Right cardiac atrium (tissue), 5 donors: ENCODE measurements at regions of chr2 and their contacts with region 1.

Region 1: GRCh38 chr2:45650851-45651414 is 542 bp upstream of the PRKCE start:
- DNase-seq: peak; percentile 93 to 98 (median 96)
- ATAC-seq: peak; percentile 81 to 89
- H3K4me3 ChIP-seq: peak overlapping the region; percentile 89
- H3K27ac ChIP-seq: peak overlapping the region; percentile 97
- H3K4me1 ChIP-seq: peaks cover 8% of the 10 kb centered on the region
- H3K27me3 ChIP-seq: no peaks in the 10 kb centered on the region

Region 2: DNA sequence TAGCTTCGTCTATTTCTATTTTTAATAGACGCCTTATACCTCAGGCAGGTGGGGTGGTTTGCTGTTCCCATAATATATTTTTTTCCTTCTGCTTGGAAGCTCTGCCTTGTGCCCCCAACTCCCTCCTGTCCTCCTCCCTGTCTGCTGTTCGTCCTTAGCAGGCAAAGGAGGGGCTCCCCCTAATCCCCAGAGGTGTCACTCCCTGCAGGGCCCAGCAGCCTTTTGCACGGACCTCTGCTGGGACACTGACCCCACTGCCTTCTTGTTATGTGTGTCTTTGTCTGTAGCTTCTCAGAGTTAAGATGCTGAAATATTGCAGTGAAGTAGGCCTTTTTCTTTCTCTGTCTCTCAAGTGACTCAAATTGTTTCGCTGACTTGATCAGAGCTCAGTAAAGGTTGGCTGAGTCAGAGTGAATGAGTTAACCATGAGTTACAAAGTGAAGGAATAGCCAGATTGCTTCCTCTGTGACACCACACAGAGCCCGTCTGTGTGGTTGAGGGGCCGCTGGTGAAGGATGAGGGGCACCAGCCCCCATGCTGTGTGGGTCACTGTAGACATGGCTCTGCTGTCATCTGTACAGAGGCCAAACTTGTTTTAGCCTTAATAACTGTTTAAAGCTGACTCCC is 48.2 kb after region 1 on chr2:
- intact Hi-C with region 1: no loop called
- DNase-seq: no peak
- ATAC-seq: peak in 1 of 2 donors; percentile 13
- H3K4me3 ChIP-seq: no peak overlapping the region
- H3K27ac ChIP-seq: no peak overlapping the region
- H3K4me1 ChIP-seq: peaks cover 2% of the 10 kb centered on the region
- H3K27me3 ChIP-seq: no peaks in the 10 kb centered on the region

Region 3: DNA sequence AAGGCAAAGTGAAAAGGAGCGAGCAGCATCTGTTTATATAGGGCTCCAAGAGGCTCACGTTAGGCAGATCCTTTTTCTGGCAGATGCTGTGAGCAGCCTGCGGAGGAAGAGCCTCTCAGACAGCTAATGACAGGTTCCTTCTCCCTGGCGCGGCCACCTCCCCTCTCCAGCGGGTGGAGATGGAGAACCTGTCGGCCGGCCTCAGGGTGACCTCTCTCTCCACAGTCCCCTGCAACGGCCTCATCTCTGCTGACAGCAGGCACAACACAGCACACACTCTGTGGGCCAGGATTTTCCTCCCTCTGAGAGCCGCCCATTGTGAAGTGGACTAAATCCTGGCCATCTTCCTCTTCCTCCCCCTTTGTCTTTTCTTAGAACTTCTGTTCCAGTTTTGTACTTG is 120.3 kb after region 1 on chr2:
- intact Hi-C with region 1: loop called (anchors 5 kb)
- DNase-seq: peak; percentile 64 to 87 (median 85)
- ATAC-seq: peak; percentile 91 to 92
- H3K4me3 ChIP-seq: no peak overlapping the region
- H3K27ac ChIP-seq: peak overlapping the region; percentile 74
- H3K4me1 ChIP-seq: peaks cover 23% of the 10 kb centered on the region
- H3K27me3 ChIP-seq: no peaks in the 10 kb centered on the region

Region 4: DNA sequence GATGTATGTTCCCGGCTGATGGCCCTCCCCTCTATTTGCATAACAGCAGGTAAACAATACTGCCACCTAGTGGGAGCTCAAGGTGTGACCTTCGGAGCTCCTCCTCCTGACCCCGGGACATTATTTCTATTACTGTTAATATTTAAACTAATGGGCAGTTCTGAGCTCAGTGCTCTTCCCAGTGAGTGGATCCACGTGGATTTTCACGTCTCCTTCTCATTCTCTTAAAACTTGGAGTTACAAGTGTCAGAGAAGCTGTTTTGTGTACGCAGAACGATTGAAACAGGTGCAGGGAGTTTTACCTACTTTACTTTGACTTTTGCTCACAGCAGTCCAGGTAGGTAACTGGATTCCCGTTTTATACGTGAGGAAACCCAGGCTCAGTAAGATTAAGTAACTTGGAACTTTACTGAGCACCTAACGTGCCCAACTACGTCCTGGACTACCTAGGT is 127.8 kb after region 1 on chr2:
- intact Hi-C with region 1: loop called (anchors 5 kb)
- DNase-seq: peak; percentile 57 to 76 (median 64)
- ATAC-seq: peak; percentile 58 to 71
- H3K4me3 ChIP-seq: no peak overlapping the region
- H3K27ac ChIP-seq: no peak overlapping the region
- H3K4me1 ChIP-seq: peaks cover 6% of the 10 kb centered on the region
- H3K27me3 ChIP-seq: no peaks in the 10 kb centered on the region